ENCODE measurements at regions of chr12 and their contacts with region 1.

Region 1: GRCh38 chr12:123787466-123787865 is 25.4 kb downstream of the DNAH10 start:
- DNase-seq: no peak

Region 2: DNA sequence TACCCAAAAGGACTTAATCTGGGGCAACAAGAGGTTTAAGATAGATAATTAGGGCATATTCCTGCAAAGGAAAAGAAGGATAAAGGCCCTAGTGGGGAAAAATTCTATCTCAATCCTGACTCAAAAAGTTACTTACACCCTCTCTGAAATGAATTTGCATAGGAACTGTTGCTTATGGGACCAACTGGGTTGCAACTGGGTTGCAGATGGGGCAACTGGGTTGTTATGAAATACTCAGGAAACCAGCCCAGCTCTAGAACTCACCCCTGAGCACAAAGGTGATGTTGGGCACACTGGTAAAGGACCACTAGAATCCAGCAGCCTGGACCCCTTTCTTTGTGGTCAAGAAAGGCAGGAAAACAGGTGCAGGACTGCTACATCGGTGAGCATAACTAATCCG is 236.8 kb before region 1 on chr12:
- in situ Hi-C with region 1: no loop called
- DNase-seq: no peak

Region 3: DNA sequence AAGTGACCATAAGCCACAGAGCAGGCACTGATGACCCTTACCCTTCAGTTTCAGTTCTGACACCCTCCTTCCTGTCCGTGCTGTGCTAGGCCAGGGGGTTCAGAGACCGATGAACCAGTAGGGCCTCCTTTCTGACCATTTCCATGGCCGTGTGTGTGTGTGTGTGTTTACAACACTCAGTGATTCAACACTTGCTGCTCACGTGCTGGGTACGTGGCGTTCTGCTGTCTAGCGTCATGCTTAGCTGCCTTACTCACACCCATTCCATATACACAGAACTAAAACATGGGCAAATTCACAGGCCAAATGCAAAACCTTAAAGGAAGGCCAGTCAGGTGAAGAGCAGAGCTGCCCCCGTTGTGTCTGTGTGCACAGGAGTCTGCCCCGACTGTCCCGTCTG is 42.1 kb after region 1 on chr12:
- in situ Hi-C with region 1: no loop called
- DNase-seq: no peak

Region 4: GRCh38 chr12:123938679-123939480 is 151.4 kb after region 1 on chr12:
- in situ Hi-C with region 1: loop called (anchors 25 kb)
- DNase-seq: no peak

Measured in G401 (cell line).